ENCODE measurements at regions of chr3 and their contacts with region 1.

Region 1: GRCh38 chr3:101724329-101725193 is at the start of gene CEP97:
- DNase-seq: peak; percentile 90
- H3K4me3 Mint-ChIP-seq: peak within 1 kb of the TSS; percentile 93
- H3K27ac Mint-ChIP-seq: peak within 1 kb of the TSS; percentile 92
- H3K4me1 Mint-ChIP-seq: peaks cover 55% of the 10 kb centered on the region
- H3K27me3 Mint-ChIP-seq: no peaks in the 10 kb centered on the region
- total RNA-seq, gene CEP97: 22.7 to 25.8 TPM

Region 2: DNA sequence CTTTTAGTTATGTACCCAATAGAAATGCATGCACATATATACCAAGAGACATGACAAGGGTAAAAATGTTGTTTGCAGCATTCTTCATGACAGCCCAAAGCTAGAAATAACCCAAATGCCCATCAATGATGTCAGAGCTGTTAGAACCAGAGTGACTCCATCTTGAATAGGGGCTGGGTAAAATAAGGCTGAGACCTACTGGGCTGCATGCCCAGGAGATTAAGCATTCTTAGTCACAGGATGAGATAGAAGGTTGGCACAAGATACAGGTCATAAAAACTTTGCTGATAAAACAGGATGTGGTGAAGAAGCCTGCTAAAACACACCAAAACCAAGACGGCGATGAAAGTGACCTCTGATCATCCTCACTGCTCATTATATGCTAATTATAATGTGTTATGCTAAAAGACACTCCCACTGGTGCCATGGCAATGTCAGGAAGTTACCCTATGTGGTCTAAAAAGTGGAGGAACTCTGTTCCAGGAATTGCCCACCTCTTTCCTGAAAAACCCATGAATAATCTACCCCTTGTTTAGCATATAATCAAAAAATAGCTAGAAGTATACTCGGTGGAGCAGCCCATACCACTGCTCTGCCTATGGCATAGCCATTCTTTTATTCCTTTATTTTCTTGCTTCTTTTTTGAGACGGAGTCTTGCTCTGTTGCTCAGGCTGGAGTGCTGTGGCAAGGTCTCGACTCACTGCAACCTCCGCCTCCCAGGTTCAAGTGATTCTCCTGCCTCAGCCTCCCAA is 80.5 kb before region 1 on chr3:
- CTCF ChIA-PET with region 1: no interaction called
- POLR2A ChIA-PET with region 1: no interaction called
- DNase-seq: peak; percentile 63
- H3K4me3 Mint-ChIP-seq: no peak overlapping the region
- H3K27ac Mint-ChIP-seq: peak overlapping the region; percentile 74
- H3K4me1 Mint-ChIP-seq: peaks cover 30% of the 10 kb centered on the region
- H3K27me3 Mint-ChIP-seq: no peaks in the 10 kb centered on the region

Region 3: GRCh38 chr3:101685870-101686412 is 38.6 kb before region 1 on chr3:
- CTCF ChIA-PET with region 1: interaction called, 4 read pairs
- POLR2A ChIA-PET with region 1: interaction called, 29 read pairs
- DNase-seq: no peak
- H3K4me3 Mint-ChIP-seq: peak overlapping the region; percentile 99
- H3K27ac Mint-ChIP-seq: peak overlapping the region; percentile 93
- H3K4me1 Mint-ChIP-seq: peaks cover 48% of the 10 kb centered on the region
- H3K27me3 Mint-ChIP-seq: no peaks in the 10 kb centered on the region

Region 4: DNA sequence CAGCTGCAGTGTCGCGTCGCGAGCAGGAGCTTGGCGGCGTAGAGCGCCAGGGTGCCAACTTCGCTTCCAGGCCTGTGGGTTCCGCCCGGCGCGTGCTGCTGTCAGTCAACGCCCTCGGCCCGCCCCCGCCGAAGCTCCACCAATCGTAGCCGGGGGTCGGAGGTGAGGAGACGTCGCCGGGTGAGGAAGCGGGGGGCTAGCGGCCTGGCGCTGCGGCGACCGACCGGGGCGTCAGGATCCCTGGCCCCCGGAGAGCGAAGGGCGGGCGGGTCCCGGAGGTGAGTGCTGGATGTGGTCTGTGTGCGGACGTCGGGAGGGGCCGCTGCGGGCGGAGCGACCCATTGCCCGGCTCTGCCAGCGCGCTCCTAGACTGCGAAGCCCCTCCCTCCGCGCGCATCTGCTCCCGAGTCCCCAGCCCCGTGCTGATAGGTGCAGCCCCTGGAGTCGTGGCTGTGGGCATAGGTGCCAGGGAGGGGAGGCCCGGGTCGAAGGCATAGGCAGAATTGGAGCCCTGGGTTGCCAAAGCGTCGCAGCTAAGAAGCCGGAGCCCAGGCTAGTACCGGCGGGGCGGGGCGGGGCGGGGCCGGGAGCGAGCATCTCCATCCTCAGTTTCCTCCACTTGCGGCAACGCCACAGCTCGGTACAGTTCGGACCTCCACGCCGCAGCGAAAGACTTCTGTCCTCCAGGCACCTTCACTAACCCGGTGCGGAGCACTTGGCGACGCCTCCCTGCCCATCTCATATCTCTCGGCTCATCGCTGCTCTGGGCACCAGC is 54.7 kb after region 1 on chr3 and contains the start of gene NXPE3:
- CTCF ChIA-PET with region 1: interaction called, 14 read pairs
- POLR2A ChIA-PET with region 1: interaction called, 26 read pairs
- DNase-seq: peak; percentile 94
- H3K4me3 Mint-ChIP-seq: peak within 1 kb of the TSS; percentile 85
- H3K27ac Mint-ChIP-seq: peak within 1 kb of the TSS; percentile 87
- H3K4me1 Mint-ChIP-seq: peaks cover 46% of the 10 kb centered on the region
- H3K27me3 Mint-ChIP-seq: no peaks in the 10 kb centered on the region
- total RNA-seq, gene NXPE3: 22.4 to 23.6 TPM

Measured in activated CD4-positive, alpha-beta memory T cell treated with anti-CD3 and anti-CD28 coated beads, Interleukin-2, amount 10 ng/mL, durations not matched to agents 7 days and 5 days (primary cell).